ENCODE measurements at regions of chr19 and their contacts with region 1.

Region 1: DNA sequence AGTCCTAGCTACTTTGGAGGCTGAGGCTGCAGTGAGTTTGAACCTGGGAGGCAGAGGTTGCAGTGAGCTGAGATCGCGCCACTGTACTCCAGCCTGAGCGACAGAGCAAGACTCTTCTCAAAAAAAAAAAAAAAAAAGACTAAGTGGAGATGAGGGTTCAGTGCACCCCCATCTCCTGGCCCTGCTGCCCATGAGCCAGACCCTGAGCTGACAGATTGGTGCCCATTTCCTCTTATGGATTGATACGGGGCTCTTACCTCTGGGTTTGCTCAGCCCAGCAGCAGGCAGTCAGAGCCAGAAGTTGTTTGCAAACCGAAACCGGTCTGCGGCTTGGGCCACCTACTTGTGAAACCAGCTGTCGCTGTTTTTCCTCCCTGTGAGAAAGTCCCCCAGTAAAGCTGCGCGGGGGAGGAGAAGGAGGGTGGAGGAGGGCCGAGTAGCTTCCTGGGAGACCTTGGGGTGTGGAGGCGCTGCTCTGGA is 36.9 kb downstream of the ARRDC2 start:
- DNase-seq: peak; percentile 71 to 91 (median 81)
- H3K4me3 ChIP-seq: peak overlapping the region; percentile 68
- H3K4me3 Mint-ChIP-seq: peak overlapping the region; percentile 13 to 91 (median 84)
- H3K27ac ChIP-seq: peak overlapping the region; percentile 64
- H3K27ac Mint-ChIP-seq: peak overlapping the region; percentile 84 to 97 (median 93)
- H3K4me1 ChIP-seq: peaks cover 35% of the 10 kb centered on the region
- H3K4me1 Mint-ChIP-seq: peaks cover 31 to 47% (median 44%) of the 10 kb centered on the region in 3 donors
- H3K27me3 ChIP-seq: no peaks in the 10 kb centered on the region
- H3K27me3 Mint-ChIP-seq: no peaks in the 10 kb centered on the region

Region 2: DNA sequence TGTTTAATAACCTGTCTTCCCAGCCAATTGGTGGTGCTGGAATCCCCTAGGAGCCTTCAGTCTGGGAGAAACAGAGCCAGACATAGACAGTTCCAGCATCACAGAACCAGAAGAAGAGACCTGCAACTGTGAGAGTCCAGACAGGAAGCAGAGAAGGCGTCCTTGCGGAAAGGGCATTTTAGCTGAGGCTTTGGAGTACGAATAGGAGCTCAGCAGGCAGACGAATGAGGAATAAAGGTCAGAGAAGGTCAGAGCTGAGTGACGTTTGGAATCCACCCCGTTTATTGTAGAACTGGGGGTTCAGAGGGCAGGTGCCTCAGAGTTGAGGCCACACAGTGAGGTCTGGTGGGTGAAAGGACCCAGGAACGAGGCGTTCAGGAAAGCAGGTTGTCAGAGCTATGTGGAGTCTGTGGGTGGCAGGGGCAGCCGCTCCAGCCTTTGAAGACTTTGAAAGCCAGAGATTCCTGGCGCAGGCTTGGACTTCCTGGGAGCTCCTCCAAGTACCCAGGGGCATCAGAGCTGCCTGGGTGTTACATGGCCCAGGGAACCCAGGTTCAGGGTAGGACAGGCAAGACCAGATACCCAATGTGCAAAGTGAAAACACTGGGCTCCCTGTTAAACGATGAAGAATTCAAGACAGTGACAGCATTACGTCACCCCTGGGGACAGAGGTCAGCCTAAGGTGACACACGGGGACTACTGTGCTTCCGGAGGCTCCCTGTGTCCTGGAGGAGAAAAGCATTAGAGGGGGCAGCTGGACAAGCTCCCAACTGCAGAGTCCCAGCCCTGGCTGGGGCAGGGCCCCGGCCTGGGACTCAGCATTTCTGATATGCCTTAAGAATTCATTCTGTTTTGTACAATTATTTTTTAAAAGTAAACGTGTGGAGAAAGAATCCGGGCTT is 31.4 kb before region 1 on chr19:
- CTCF ChIA-PET with region 1: interaction called, 17 read pairs
- POLR2A ChIA-PET with region 1: interaction called, 18 read pairs
- DNase-seq: no peak
- H3K4me3 ChIP-seq: no peak overlapping the region
- H3K4me3 Mint-ChIP-seq: peak overlapping the region; percentile 51 to 85 (median 71)
- H3K27ac ChIP-seq: no peak overlapping the region
- H3K27ac Mint-ChIP-seq: peak overlapping the region; percentile 71 to 97 (median 91)
- H3K4me1 ChIP-seq: peaks cover 69% of the 10 kb centered on the region
- H3K4me1 Mint-ChIP-seq: peaks cover 29 to 65% (median 48%) of the 10 kb centered on the region in 3 donors
- H3K27me3 ChIP-seq: no peaks in the 10 kb centered on the region
- H3K27me3 Mint-ChIP-seq: no peaks in the 10 kb centered on the region

Region 3: DNA sequence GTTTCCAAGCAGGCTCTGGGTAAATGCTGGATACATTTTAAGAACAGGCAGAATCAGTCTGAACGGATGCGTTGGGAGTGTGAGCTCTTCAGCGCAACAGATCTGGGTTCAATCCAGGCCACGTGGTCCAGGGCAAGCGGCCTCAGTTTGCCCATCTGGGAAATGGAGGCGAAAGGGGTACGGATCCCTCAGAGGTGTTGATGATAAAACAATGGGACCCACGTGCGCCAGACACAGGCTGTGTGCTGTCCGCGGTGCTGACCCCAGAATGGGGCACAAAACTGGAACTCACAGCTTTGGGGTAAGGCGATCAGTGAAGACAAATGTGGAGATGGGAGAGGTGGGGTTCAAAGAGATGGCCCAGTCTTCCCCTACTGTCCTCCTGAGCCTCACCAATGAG is 194.4 kb after region 1 on chr19:
- CTCF ChIA-PET with region 1: no interaction called
- POLR2A ChIA-PET with region 1: no interaction called
- DNase-seq: no peak
- H3K4me3 ChIP-seq: no peak overlapping the region
- H3K4me3 Mint-ChIP-seq: no peak overlapping the region
- H3K27ac ChIP-seq: no peak overlapping the region
- H3K27ac Mint-ChIP-seq: no peak overlapping the region
- H3K4me1 ChIP-seq: no peaks in the 10 kb centered on the region
- H3K4me1 Mint-ChIP-seq: no peaks in the 10 kb centered on the region
- H3K27me3 ChIP-seq: no peaks in the 10 kb centered on the region
- H3K27me3 Mint-ChIP-seq: peaks cover 19 to 32% of the 10 kb centered on the region in 2 donors